Activated T-helper 2 cell treated with anti-CD3 and anti-CD28 coated beads, Interferon-gamma antibody, Interleukin-2, Interleukin-4, amounts not matched to agents 10 μg/mL and 5 μg/mL and 100 μg/mL, durations not matched to agents 14 hours and 24 hours and 36 hours (primary cell): ENCODE measurements at regions of chr3 and their contacts with region 1.

Region 1: GRCh38 chr3:143951351-143951971 is 20.2 kb upstream of the DIPK2A start:
- DNase-seq: no peak
- H3K4me3 Mint-ChIP-seq: no peak overlapping the region
- H3K27ac Mint-ChIP-seq: no peak overlapping the region
- H3K4me1 Mint-ChIP-seq: peaks cover 3% of the 10 kb centered on the region
- H3K27me3 Mint-ChIP-seq: peaks cover 30% of the 10 kb centered on the region

Region 2: DNA sequence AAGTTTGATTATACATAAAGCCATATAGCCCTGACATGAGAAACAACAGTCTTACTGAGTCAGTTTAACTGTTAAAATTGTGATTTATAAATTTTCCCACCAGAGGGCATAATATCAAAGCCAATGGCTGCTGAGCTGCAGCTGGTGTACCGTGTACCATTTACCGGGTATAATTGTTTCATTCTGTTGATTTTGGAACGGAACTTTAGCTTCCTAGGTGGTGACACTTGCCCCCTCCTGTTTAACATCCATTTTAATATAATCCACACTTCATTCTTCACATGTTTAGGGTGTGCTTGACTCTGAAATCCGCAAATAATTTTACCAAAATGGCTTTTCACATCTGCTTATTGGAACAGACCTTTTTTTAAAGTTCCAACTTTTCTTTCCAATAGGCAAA is 176.0 kb before region 1 on chr3:
- intact Hi-C with region 1: loop called (anchors 1 kb)
- DNase-seq: no peak
- H3K4me3 Mint-ChIP-seq: no peak overlapping the region
- H3K27ac Mint-ChIP-seq: no peak overlapping the region
- H3K4me1 Mint-ChIP-seq: no peaks in the 10 kb centered on the region
- H3K27me3 Mint-ChIP-seq: peaks cover 6% of the 10 kb centered on the region

Region 3: GRCh38 chr3:143885780-143886427 is 65.6 kb before region 1 on chr3:
- intact Hi-C with region 1: loop called (anchors 5 kb)
- DNase-seq: no peak
- H3K4me3 Mint-ChIP-seq: no peak overlapping the region
- H3K27ac Mint-ChIP-seq: no peak overlapping the region
- H3K4me1 Mint-ChIP-seq: no peaks in the 10 kb centered on the region
- H3K27me3 Mint-ChIP-seq: peaks cover 17% of the 10 kb centered on the region